H1 (cell line): ENCODE measurements at regions of chr12 and their contacts with region 1.

Region 1: GRCh38 chr12:120286796-120287465 is 4.8 kb downstream of the RNU4-2 start:
- DNase-seq: no peak
- H3K4me3 ChIP-seq: no peak overlapping the region
- H3K27ac ChIP-seq: no peak overlapping the region
- H3K4me1 ChIP-seq: peaks cover 2 to 7% (median 4%) of the 10 kb centered on the region in 4 experiments; a peak in 5 of 7 replicates
- H3K27me3 ChIP-seq: no peaks in the 10 kb centered on the region
- CTCF ChIP-seq: no peak
- EP300 ChIP-seq: no peak
- POLR2A ChIP-seq: no peak
- RAD21 ChIP-seq: no peak

Region 2: GRCh38 chr12:120234643-120235368 is 52.1 kb before region 1 on chr12:
- CTCF ChIA-PET with region 1: interaction called, 148 read pairs
- POLR2A ChIA-PET with region 1: interaction called, 4,270 read pairs
- DNase-seq: no peak
- H3K4me3 ChIP-seq: no peak overlapping the region
- H3K27ac ChIP-seq: no peak overlapping the region
- H3K4me1 ChIP-seq: peaks cover 34 to 57% (median 38%) of the 10 kb centered on the region in 4 experiments
- H3K27me3 ChIP-seq: no peaks in the 10 kb centered on the region
- CTCF ChIP-seq: peak; percentile 57 to 67 (median 57)
- EP300 ChIP-seq: no peak
- POLR2A ChIP-seq: no peak
- RAD21 ChIP-seq: peak; percentile 38 to 46; a peak in 3 of 4 replicates